H1 (cell line): ENCODE measurements at regions of chr9 and their contacts with region 1.

Region 1: GRCh38 chr9:131334629-131335367 is 45.3 kb downstream of the PLPP7 start:
- DNase-seq: no peak
- H3K4me3 ChIP-seq: no peak overlapping the region
- H3K27ac ChIP-seq: no peak overlapping the region
- H3K4me1 ChIP-seq: peaks cover 0 to 14% (median 8%) of the 10 kb centered on the region in 4 experiments
- H3K27me3 ChIP-seq: no peaks in the 10 kb centered on the region
- CTCF ChIP-seq: no peak
- EP300 ChIP-seq: no peak
- POLR2A ChIP-seq: no peak
- RAD21 ChIP-seq: no peak

Region 2: GRCh38 chr9:131178382-131178781 is 156.4 kb before region 1 on chr9:
- CTCF ChIA-PET with region 1: interaction called, 96 read pairs
- POLR2A ChIA-PET with region 1: no interaction called
- DNase-seq: peak; percentile 25 to 87
- H3K4me3 ChIP-seq: no peak overlapping the region
- H3K27ac ChIP-seq: no peak overlapping the region
- H3K4me1 ChIP-seq: no peaks in the 10 kb centered on the region
- H3K27me3 ChIP-seq: no peaks in the 10 kb centered on the region
- CTCF ChIP-seq: peak; percentile 93 to 99 (median 97)
- EP300 ChIP-seq: no peak
- POLR2A ChIP-seq: no peak
- RAD21 ChIP-seq: peak; percentile 83 to 87

Region 3: GRCh38 chr9:131227112-131227958 is 107.5 kb before region 1 on chr9:
- CTCF ChIA-PET with region 1: interaction called, 36 read pairs
- POLR2A ChIA-PET with region 1: no interaction called
- DNase-seq: no peak
- H3K4me3 ChIP-seq: no peak overlapping the region
- H3K27ac ChIP-seq: no peak overlapping the region
- H3K4me1 ChIP-seq: peaks cover 8 to 16% (median 12%) of the 10 kb centered on the region in 4 experiments; a peak in 6 of 7 replicates
- H3K27me3 ChIP-seq: no peaks in the 10 kb centered on the region
- CTCF ChIP-seq: no peak
- EP300 ChIP-seq: no peak
- POLR2A ChIP-seq: no peak
- RAD21 ChIP-seq: no peak

Region 4: DNA sequence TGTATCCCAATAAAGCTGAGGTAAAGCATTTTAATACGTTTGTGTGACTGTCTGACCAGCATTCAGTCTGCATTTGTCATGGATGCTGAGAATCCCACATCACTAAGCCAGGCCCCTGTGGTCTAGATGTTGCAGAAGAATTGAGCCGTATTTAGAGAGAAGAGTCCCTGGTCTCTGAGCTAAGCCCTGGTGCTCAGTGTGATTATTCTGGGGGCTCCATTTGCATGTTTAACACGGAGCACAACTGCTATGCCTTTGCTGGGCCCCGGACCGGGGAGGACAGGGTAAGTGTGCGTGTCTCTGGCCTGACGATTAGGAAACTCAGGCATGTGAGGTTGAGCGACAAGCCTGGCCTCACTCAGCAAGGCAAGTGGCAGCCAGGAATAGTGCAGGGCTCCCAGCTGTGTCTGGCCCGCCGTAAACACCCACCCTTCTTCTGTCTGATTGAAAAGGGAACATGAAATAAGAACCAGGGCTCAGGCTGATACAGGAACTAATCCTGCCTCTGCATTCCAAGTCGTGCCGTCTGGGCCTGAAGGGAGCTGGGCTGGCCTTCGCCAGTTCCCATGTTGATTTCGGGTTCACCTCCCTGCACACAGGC is 80.8 kb before region 1 on chr9:
- CTCF ChIA-PET with region 1: interaction called, 15 read pairs
- POLR2A ChIA-PET with region 1: no interaction called
- DNase-seq: no peak
- H3K4me3 ChIP-seq: no peak overlapping the region
- H3K27ac ChIP-seq: no peak overlapping the region
- H3K4me1 ChIP-seq: peaks cover 0 to 9% (median 1%) of the 10 kb centered on the region in 4 experiments; a peak in 1 of 7 replicates
- H3K27me3 ChIP-seq: no peaks in the 10 kb centered on the region
- CTCF ChIP-seq: no peak
- EP300 ChIP-seq: no peak
- POLR2A ChIP-seq: no peak
- RAD21 ChIP-seq: no peak

Region 5: DNA sequence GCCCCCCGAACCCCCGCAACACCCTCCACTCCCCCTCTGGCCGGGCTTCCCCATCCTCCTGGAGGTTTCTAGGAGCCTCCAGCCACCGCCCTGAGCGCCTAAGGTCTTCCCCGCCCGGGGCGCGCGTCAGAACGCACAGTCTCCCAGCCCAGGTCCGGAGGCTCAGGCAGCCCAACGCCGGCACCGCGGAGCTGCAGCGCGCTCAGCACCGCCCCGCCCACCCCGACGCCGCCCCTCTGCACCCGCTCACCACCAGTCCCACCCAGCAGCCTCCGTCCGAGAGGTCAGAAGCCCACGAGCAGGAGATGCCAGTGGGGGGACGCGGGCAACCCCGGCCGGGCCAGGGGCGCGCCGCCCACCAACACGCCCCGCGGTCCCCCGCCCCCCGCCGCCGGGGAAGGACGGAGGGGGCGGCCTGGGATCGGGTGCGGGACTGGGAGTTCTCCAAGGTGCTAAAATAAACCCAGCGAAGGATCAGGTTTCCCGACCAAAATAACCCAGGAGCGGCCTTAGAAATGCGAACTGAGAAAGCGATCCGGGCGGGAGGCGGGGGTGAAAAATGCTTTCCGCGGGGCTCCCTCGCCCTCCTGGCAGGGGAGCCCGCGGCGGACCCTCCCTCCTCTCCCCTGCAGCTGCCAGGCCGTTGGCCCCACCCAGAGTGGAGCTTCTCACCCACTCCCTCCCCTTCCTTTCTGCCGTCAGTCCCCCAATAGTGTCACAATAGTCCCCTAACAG is 51.9 kb before region 1 on chr9:
- CTCF ChIA-PET with region 1: interaction called, 24 read pairs
- POLR2A ChIA-PET with region 1: interaction called, 5 read pairs
- DNase-seq: peak in 1 of 2 experiments; percentile 79
- H3K4me3 ChIP-seq: peak overlapping the region; percentile 33 to 75 (median 36)
- H3K27ac ChIP-seq: no peak overlapping the region
- H3K4me1 ChIP-seq: peaks cover 0 to 18% (median 6%) of the 10 kb centered on the region in 4 experiments; a peak in 5 of 7 replicates
- H3K27me3 ChIP-seq: peaks cover 0 to 16% (median 11%) of the 10 kb centered on the region in 4 experiments; a peak in 6 of 7 replicates
- CTCF ChIP-seq: no peak
- EP300 ChIP-seq: no peak
- POLR2A ChIP-seq: no peak
- RAD21 ChIP-seq: no peak

Region 6: GRCh38 chr9:131310833-131311554 is 23.8 kb before region 1 on chr9:
- CTCF ChIA-PET with region 1: interaction called, 17 read pairs
- POLR2A ChIA-PET with region 1: no interaction called
- DNase-seq: no peak
- H3K4me3 ChIP-seq: no peak overlapping the region
- H3K27ac ChIP-seq: no peak overlapping the region; the same call in 1 of the 2 replicates
- H3K4me1 ChIP-seq: no peaks in the 10 kb centered on the region
- H3K27me3 ChIP-seq: no peaks in the 10 kb centered on the region
- CTCF ChIP-seq: peak in 1 of 3 experiments; percentile 30; a peak in 2 of 4 replicates
- EP300 ChIP-seq: no peak
- POLR2A ChIP-seq: no peak
- RAD21 ChIP-seq: no peak; a peak in 1 of 4 replicates

Region 7: DNA sequence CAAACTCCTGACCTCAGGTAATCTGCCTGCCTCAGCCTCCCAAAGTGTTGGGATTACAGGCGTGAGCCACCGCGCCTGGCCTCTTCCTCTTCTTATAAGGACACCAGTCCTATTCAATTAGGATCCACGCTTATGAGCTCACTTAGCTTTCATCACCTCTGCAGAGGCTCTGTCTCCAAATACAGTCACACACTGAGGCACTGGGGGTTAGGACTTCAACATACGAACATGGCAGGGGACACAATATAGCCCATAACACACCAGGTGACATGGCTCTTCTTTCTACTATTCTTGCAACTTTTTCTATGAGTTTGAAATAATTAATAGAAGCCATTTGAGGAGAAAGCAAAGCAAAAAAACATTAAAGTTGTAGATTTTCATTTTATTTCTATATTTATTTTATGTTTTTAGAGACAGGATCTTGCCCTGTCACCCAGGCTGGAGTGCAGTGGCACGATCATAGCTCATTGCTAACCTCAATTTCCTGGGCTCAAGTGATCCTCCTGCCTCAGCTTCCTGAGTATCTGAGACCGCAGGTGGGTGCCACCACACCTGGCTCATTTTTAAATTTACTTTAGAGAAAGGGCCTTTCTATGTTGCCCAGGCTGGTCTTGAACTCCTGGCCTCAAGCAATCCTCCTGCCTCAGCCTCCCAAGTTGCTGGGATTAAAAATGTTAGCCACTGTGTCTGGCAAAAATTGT is 204.6 kb after region 1 on chr9:
- CTCF ChIA-PET with region 1: no interaction called
- POLR2A ChIA-PET with region 1: no interaction called
- DNase-seq: no peak
- H3K4me3 ChIP-seq: no peak overlapping the region
- H3K27ac ChIP-seq: no peak overlapping the region
- H3K4me1 ChIP-seq: no peaks in the 10 kb centered on the region
- H3K27me3 ChIP-seq: peaks cover 0 to 7% (median 3%) of the 10 kb centered on the region in 4 experiments; a peak in 6 of 7 replicates
- CTCF ChIP-seq: no peak
- EP300 ChIP-seq: no peak
- POLR2A ChIP-seq: no peak
- RAD21 ChIP-seq: no peak